ENCODE measurements at regions of chr10 and their contacts with region 1.

Region 1: DNA sequence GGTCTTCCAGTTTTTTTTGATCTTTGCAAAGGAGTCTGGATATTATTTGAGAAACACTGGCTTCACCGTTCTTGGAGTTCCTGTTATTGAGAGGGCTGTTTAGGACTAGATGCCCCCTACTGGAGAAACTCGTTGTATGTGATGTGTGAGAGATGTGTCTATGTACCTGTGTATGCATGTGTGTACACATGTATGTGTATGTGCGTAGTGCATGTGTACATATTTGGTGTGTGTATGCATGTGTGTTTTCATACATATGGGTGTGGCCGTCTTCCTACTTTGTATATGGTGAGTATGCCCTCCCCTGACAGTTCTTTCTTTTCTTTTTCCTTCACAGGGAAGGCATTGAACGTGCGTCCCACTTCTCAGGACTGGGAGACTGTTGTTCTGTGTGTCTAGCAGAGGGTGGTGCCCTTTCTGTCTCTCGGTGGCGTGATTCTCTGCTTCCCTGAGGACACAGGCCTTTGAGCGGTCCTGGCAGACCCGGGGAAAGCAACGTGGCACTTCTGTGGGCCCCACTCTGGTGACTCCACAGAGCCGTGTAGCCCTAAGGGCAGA is 3.0 kb upstream of the CALHM3 start:
- DNase-seq: no peak
- H3K4me3 ChIP-seq: no peak overlapping the region
- CTCF ChIP-seq: peak; percentile 72

Region 2: DNA sequence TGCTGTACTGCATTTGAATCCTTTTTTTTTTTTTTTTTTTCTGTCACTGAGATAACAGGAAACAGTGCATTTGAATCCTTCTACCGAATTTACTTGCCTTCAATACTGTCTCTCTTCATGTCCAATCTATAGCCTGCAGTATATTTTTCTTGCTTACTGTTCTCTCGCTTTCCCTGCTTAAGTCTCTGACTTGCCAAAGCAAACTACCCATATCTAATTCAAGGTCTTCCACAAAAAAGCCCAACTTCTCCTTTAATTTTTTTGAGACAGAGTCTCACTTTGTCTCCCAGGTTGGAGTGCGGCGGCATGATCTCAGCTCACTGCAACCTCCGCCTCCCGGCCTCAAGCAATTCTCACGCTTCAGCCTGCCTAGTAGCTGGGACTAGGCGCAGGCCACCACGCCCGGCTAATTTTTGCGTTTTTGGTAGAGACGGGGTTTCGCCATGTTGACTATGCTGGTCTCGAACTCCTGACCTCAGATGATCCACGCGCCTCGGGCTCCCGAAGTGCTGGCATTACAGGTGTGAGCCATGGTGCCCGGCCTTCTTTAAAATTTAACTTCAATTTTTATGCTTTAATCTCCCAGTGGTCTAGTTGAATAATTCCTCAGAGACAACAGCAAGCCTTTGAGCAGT is 84.7 kb before region 1 on chr10:
- CTCF ChIA-PET with region 1: interaction called, 22 read pairs
- POLR2A ChIA-PET with region 1: no interaction called
- DNase-seq: no peak
- H3K4me3 ChIP-seq: peak overlapping the region; percentile 95
- CTCF ChIP-seq: no peak

Region 3: GRCh38 chr10:103423748-103424147 is 58.3 kb before region 1 on chr10:
- CTCF ChIA-PET with region 1: interaction called, 250 read pairs
- POLR2A ChIA-PET with region 1: no interaction called
- DNase-seq: no peak
- H3K4me3 ChIP-seq: no peak overlapping the region
- CTCF ChIP-seq: no peak

Region 4: DNA sequence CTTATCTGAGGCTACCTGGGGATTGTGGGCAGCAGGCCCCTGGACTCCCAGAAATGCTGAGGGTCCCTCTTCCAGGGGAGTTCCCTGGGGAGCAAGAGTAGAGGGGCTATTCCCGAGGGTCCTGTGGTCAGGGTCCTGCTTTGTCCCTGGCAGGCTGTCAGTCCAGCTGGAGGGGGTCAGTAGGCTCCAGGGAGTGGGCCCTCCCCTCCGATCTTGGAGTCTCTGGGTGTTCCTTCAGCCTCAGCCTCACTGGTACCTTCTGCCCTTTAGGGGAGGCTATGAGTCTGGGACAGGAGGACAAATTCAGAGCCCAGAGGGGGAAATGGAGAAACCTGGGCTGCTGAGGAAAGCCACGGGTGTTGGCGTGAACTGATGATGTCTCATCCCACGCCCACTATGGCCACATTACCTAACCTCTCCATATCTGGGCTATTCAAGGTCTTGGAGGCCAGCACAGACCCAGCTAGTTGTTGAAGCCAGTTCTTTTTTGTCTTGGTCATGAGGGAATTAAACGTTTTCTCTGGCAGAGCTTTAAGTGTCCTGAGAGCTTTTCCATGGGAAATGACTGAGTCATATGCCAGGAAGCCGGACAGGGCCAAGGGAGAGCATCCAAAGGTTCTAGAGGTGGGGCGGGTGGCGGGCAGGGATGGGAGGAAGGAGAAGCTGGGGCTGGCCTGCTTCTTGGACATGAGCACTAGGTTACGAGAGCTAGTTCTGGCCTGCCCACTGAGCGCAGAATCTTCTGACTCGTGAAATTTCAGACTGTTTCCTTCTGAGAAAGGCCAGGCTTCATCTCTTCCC is 36.1 kb before region 1 on chr10:
- CTCF ChIA-PET with region 1: interaction called, 84 read pairs
- POLR2A ChIA-PET with region 1: no interaction called
- DNase-seq: no peak
- H3K4me3 ChIP-seq: no peak overlapping the region
- CTCF ChIP-seq: no peak

Region 5: GRCh38 chr10:103470761-103471653 is 11.0 kb before region 1 on chr10:
- CTCF ChIA-PET with region 1: interaction called, 83 read pairs
- POLR2A ChIA-PET with region 1: no interaction called
- DNase-seq: no peak
- H3K4me3 ChIP-seq: no peak overlapping the region
- CTCF ChIP-seq: no peak

Region 6: DNA sequence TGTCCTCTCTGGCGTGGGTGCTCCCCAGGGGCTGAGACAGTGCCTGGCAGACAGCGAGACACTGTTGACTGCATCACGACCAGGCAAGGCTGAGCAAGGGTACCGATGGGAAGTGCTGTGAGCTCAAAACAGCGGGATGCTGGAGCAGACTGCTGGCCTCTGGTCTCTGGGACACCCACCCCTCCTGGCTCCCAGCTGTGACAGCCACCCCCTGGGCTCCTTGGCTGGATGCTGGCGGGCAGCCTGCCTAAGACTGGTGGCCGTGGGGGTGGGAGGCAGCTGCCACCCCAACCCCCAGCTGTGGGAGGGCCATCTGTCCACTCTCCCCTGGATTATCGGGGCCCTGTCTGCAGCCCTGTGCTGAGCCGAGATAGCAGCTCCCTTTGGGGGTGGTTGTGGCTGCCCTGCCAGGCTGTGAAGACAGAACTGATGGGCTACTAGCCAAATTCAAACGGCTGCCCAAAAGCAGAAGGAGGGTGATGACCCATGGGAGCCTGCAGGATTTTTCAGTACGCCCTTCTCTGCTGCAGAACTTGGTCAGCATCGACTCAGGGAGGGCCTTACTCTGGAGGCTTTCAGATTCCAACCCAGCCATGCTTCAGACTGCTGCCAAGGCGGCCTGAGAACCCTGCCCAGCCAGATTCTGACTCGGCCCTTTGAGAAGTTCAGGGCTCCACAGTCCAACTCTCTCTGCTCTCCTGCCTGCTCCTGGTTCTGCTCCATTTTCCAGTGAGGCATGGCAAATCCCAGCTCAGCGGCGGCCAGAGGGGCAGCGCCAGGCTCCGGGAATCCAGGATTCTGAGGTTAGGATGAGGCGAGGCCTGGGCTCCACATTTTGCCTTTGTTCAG is 136.7 kb after region 1 on chr10:
- CTCF ChIA-PET with region 1: no interaction called
- POLR2A ChIA-PET with region 1: no interaction called
- DNase-seq: no peak
- H3K4me3 ChIP-seq: no peak overlapping the region
- CTCF ChIP-seq: no peak

Region 7: DNA sequence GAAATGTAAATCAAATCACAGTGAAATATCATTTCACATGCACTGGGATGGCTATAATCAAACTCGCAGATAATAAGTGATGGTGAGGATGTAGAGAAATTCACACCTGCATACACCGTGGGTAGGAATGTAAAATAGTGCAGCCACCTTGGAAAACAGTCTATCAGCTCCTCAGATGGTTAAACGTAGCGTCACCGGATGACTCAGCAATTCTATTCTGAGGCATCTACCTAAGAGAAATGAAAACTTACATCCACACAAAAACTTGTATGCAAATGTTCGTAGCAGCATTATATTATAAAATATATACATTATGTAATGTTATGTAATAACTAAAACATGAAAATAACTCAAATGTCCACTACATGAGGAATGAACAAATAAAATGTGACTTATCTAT is 334.4 kb after region 1 on chr10:
- CTCF ChIA-PET with region 1: no interaction called
- POLR2A ChIA-PET with region 1: no interaction called
- DNase-seq: no peak
- H3K4me3 ChIP-seq: no peak overlapping the region
- CTCF ChIP-seq: no peak

Region 8: DNA sequence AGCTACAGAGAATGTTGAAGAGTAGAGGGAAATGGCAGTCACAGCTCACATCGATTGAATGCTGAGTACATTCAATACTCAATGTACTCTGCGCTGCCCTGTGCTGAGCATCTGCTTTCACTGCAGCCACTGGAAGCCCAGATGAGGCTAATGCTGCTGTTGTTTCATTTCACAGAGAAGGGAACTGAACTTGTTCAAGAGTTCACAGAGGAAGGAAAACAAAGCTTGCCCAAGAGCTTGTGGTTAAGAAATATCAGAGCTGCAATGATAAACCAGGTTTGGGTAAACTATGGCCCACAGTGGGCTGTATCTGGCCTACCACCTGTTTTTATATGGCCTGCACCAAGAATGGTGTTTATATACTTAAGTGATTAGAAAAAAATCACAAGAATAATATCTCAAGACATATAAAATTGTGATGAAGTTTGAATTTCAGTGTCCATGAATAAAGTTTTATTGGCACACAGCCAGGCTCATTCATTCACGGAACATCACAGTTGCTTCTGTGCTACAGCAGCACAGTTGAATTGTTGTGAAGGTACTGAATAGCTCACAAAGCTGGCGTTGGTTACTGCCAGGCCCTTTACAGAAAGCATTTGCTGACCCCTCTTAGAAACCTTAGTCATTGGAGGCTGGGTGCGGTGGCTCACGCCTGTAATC is 935.7 kb after region 1 on chr10:
- CTCF ChIA-PET with region 1: no interaction called
- POLR2A ChIA-PET with region 1: no interaction called
- DNase-seq: no peak
- H3K4me3 ChIP-seq: no peak overlapping the region
- CTCF ChIP-seq: no peak

Measured in AG04449 (cell line).